GM12878 (cell line): ENCODE measurements at regions of chr12 and their contacts with region 1.

Region 1: GRCh38 chr12:31682136-31682962 is 22.9 kb downstream of the ETFBKMT start:
- DNase-seq: peak; percentile 95
- ATAC-seq: peak; percentile 95
- H3K4me3 ChIP-seq: no peak overlapping the region
- H3K27ac ChIP-seq: no peak overlapping the region; the same call in 1 of the 2 replicates
- H3K4me1 ChIP-seq: peaks cover 3% of the 10 kb centered on the region; the same call in 1 of the 2 replicates
- H3K27me3 ChIP-seq: no peaks in the 10 kb centered on the region
- CTCF ChIP-seq: peak; percentile 77 to 93 (median 86)
- EP300 ChIP-seq: no peak
- POLR2A ChIP-seq: no peak
- RAD21 ChIP-seq: peak; percentile 100

Region 2: DNA sequence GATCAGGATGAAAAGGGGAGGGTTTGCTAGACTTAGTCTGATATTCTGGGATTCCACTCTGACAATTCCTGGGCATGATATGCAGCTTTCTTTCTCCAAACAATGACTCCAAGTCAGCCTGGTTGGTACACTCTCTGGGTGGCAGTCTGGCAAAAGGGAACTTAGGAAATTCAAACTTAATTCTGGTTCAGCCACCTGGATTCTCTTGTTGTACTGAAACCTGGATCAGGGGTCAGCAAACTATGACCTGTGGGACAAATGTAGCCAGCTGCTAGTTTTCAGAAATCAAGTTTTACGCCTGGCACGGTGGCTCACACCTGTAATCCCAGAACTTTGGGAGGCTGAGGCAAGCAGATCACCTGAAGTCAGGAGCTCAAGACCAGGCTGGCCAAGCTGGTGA is 40.2 kb after region 1 on chr12:
- CTCF ChIA-PET with region 1: no interaction called
- POLR2A ChIA-PET with region 1: interaction called, 13 read pairs
- RAD21 ChIA-PET with region 1: interaction called, 6 read pairs
- SMC1A ChIA-PET with region 1: interaction called, 16 read pairs
- in situ Hi-C with region 1: no loop called
- intact Hi-C with region 1: loop called (anchors 2 kb)
- DNase-seq: no peak
- ATAC-seq: no peak
- H3K4me3 ChIP-seq: no peak overlapping the region; the same call in 1 of the 2 replicates
- H3K27ac ChIP-seq: peak overlapping the region; percentile 36
- H3K4me1 ChIP-seq: peaks cover 22% of the 10 kb centered on the region
- H3K27me3 ChIP-seq: no peaks in the 10 kb centered on the region
- CTCF ChIP-seq: no peak
- EP300 ChIP-seq: no peak
- POLR2A ChIP-seq: no peak
- RAD21 ChIP-seq: no peak

Region 3: DNA sequence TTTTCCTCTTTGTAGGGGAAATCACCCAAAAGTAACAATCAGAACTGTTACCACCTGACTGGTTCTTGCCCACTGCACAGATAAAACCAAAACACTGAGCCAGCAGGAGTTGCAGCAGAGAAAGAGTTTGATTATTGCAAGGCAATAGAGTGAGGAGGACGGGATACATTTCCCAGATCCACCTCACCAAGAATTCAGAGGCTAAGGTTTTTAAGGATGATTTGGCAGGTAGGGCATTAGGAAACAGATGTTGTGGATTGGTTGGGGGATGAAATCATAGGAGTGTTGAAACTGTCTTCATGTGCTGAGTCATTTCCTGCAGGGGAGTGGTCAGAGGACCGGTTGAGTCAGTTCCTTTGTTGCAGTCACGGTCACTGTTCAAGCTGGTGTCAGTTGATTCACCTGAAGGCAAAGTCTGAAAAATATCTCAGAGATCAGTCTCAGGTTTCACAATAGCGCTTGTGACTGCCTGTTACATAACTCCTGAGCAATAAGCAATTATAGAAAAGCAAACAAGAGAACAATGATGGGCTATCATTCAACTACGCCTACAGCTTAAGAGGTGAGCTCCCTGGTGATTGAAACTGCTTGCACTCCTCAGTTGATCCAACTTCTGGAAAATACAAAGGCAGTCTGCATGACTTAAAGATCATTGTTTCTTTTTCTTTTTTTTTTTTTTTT is 66.8 kb after region 1 on chr12:
- CTCF ChIA-PET with region 1: interaction called, 11 read pairs
- POLR2A ChIA-PET with region 1: interaction called, 6 read pairs
- RAD21 ChIA-PET with region 1: interaction called, 16 read pairs
- SMC1A ChIA-PET with region 1: interaction called, 17 read pairs
- in situ Hi-C with region 1: no loop called
- intact Hi-C with region 1: loop called (anchors 2 kb)
- DNase-seq: peak; percentile 99
- ATAC-seq: peak; percentile 81
- H3K4me3 ChIP-seq: no peak overlapping the region
- H3K27ac ChIP-seq: peak overlapping the region; percentile 77
- H3K4me1 ChIP-seq: peaks cover 55% of the 10 kb centered on the region
- H3K27me3 ChIP-seq: no peaks in the 10 kb centered on the region
- CTCF ChIP-seq: no peak
- EP300 ChIP-seq: peak; percentile 94 to 97
- POLR2A ChIP-seq: peak; percentile 66
- RAD21 ChIP-seq: peak; percentile 25; the same call in 1 of the 2 replicates

Region 4: DNA sequence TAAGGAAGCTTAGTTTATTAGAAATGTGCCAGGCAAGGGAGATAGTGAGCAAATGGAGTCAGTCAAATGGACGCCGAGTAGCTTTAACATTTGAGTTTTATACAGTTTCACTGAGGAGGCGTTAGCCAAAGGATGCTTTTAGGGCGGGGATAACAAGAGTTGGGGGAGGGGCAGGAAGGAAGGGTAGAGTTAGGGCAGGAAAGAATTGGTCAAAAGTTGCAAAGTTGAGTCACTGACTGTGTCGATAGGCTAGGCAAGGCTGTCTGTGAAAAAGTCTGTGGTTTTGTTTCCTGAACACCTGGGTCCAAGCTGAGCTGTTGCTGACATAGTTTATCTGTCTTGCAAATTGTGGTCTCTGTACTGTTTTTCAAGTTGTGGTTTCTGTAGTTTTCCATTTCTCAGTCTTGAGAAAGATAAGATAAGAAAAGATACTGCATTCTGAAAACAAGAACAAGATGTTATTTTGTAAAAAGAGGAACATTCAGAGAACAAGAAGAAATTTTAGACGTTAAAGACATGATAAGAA is 214.2 kb after region 1 on chr12:
- CTCF ChIA-PET with region 1: no interaction called
- POLR2A ChIA-PET with region 1: no interaction called
- RAD21 ChIA-PET with region 1: interaction called, 3 read pairs
- SMC1A ChIA-PET with region 1: interaction called, 8 read pairs
- in situ Hi-C with region 1: no loop called
- intact Hi-C with region 1: loop called (anchors 5 kb)
- DNase-seq: peak; percentile 99
- ATAC-seq: peak; percentile 99
- H3K4me3 ChIP-seq: no peak overlapping the region
- H3K27ac ChIP-seq: peak overlapping the region; percentile 98
- H3K4me1 ChIP-seq: peaks cover 21% of the 10 kb centered on the region
- H3K27me3 ChIP-seq: no peaks in the 10 kb centered on the region
- CTCF ChIP-seq: no peak
- EP300 ChIP-seq: peak; percentile 95
- POLR2A ChIP-seq: peak; percentile 62
- RAD21 ChIP-seq: 0 out of 2 replicates have a peak, but pooled peaks have one; percentile 14

Region 5: GRCh38 chr12:31931796-31932715 is 249.7 kb after region 1 on chr12:
- CTCF ChIA-PET with region 1: no interaction called
- POLR2A ChIA-PET with region 1: no interaction called
- RAD21 ChIA-PET with region 1: no interaction called
- SMC1A ChIA-PET with region 1: no interaction called
- in situ Hi-C with region 1: no loop called
- intact Hi-C with region 1: no loop called
- DNase-seq: no peak
- ATAC-seq: no peak
- H3K4me3 ChIP-seq: no peak overlapping the region
- H3K27ac ChIP-seq: no peak overlapping the region
- H3K4me1 ChIP-seq: peaks cover 11% of the 10 kb centered on the region; the same call in 1 of the 2 replicates
- H3K27me3 ChIP-seq: no peaks in the 10 kb centered on the region
- CTCF ChIP-seq: 0 out of 6 replicates have a peak, but pooled peaks of 1 of the 3 experiments have one; percentile 3
- EP300 ChIP-seq: no peak
- POLR2A ChIP-seq: no peak
- RAD21 ChIP-seq: no peak

Region 6: DNA sequence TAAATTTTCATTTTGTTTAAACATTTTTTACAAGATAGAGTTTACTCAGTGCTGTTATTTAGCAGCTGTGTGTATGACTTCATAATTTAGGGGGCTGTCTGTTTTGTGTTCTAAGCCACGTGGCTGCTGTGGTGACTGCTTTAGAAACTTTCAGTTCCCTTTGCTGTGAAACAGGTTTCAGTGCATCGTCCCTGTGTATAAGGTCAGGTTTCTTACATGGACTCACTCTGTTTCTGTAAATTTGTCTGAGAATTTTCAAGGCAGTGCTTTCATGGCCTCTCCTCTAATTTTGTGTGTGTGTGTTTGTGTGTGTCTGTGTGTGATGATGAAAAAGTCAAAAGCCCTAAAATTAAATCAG is 456.7 kb after region 1 on chr12:
- CTCF ChIA-PET with region 1: interaction called, 4 read pairs
- POLR2A ChIA-PET with region 1: no interaction called
- RAD21 ChIA-PET with region 1: no interaction called
- SMC1A ChIA-PET with region 1: no interaction called
- in situ Hi-C with region 1: no loop called
- intact Hi-C with region 1: loop called (anchors 1 kb)
- DNase-seq: peak; percentile 92
- ATAC-seq: peak; percentile 94
- H3K4me3 ChIP-seq: peak overlapping the region; percentile 71; the same call in 1 of the 2 replicates
- H3K27ac ChIP-seq: peak overlapping the region; percentile 98
- H3K4me1 ChIP-seq: peaks cover 23% of the 10 kb centered on the region
- H3K27me3 ChIP-seq: no peaks in the 10 kb centered on the region
- CTCF ChIP-seq: no peak
- EP300 ChIP-seq: peak; percentile 86 to 97
- POLR2A ChIP-seq: peak; percentile 59
- RAD21 ChIP-seq: 0 out of 2 replicates have a peak, but pooled peaks have one; percentile 15